Activated naive CD4-positive, alpha-beta T cell treated with anti-CD3 and anti-CD28 coated beads for 36 hours (primary cell): ENCODE measurements at regions of chr6 and their contacts with region 1.

Region 1: DNA sequence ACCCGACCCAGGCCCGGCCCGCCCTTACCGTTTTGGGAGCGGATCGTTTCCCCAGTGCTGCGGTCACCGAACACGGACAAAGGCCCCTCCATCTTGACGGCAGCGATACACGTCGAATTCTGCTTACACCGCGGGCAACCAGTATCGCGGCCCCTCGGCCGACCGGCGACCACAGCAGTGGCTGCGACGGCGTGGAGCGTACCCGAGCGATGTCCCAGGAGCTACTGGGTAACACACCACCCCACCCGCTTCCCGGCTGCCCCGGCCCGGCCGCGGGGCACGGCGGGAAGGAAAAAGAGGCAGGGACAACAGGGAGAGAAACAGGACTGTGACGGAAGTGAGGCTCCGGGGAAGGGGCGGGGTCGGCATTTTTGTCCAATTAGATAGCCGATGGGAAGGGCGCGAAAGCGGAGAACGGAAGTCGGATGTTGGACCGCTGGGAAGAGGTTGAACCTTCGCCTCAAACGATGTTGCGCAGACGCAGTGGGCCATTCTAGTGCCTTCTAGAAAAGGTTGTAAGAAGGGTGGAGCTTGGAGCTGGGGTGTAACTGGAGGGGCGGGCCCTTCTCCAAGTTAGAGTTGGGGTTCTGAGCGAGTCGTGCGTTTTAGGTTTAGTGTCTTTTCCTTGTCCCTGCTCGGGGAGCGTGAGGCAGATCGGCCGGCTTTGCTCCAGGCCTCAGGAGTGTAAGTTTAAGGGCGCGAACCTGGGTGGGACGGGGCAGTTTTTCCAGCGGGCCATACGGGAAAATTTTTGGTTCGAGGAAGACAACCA is at the start of gene TCP1:
- DNase-seq: peak; percentile 100
- H3K4me3 Mint-ChIP-seq: peak within 1 kb of the TSS; percentile 99
- H3K27ac Mint-ChIP-seq: peak within 1 kb of the TSS; percentile 98
- H3K4me1 Mint-ChIP-seq: peaks cover 66% of the 10 kb centered on the region
- H3K27me3 Mint-ChIP-seq: no peaks in the 10 kb centered on the region
- total RNA-seq, gene TCP1: 420 to 425 TPM

Region 2: GRCh38 chr6:159754959-159755914 is 34.3 kb before region 1 on chr6:
- CTCF ChIA-PET with region 1: interaction called, 3 read pairs
- intact Hi-C with region 1: loop called (anchors 5 kb)
- DNase-seq: no peak
- H3K4me3 Mint-ChIP-seq: no peak overlapping the region
- H3K27ac Mint-ChIP-seq: peak overlapping the region; percentile 28
- H3K4me1 Mint-ChIP-seq: peaks cover 18% of the 10 kb centered on the region
- H3K27me3 Mint-ChIP-seq: no peaks in the 10 kb centered on the region

Region 3: DNA sequence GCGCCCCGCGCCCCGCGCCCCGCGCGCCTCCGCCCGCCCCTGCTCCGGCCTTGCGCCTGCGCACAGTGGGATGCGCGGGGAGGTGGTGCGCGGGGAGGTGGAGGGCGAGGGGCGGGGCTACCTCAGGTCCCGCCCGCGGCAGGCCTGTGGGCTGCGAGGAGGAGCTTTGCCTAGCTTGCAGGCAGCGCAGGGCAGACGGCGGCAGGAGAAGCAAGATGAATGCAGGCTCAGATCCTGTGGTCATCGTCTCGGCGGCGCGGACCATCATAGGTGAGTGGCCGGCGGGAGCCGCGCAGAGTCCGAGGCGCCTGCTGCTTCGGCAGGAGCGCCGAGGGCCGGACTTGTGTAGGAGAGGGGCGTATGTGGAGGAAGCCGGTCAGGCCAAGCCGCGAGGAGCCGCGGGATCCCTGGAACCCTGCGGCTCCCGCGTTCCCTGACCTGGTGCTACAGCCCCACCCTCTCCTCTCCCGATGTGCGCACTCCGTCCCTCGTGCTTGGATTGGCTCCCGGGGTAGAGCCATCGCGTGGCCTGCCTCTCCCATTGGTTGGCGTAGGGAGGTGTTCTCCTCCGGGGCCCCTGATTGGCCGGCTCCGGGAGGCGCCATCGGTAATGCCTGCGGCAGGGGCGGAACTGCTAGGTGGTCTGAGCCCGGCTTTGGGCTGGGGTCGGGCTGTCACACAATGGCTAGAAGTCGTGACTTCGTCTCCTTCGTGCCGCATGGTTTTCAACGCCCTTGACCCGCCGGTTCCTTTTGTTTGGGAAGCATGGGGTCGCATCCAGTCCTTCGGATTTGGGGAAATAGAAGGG is 27.5 kb before region 1 on chr6 and contains the start of gene ACAT2:
- CTCF ChIA-PET with region 1: no interaction called
- intact Hi-C with region 1: loop called (anchors 1 kb)
- DNase-seq: peak; percentile 97
- H3K4me3 Mint-ChIP-seq: peak within 1 kb of the TSS; percentile 96
- H3K27ac Mint-ChIP-seq: peak within 1 kb of the TSS; percentile 96
- H3K4me1 Mint-ChIP-seq: peaks cover 42% of the 10 kb centered on the region
- H3K27me3 Mint-ChIP-seq: no peaks in the 10 kb centered on the region
- total RNA-seq, gene ACAT2: 84.9 to 92.4 TPM

Region 4: DNA sequence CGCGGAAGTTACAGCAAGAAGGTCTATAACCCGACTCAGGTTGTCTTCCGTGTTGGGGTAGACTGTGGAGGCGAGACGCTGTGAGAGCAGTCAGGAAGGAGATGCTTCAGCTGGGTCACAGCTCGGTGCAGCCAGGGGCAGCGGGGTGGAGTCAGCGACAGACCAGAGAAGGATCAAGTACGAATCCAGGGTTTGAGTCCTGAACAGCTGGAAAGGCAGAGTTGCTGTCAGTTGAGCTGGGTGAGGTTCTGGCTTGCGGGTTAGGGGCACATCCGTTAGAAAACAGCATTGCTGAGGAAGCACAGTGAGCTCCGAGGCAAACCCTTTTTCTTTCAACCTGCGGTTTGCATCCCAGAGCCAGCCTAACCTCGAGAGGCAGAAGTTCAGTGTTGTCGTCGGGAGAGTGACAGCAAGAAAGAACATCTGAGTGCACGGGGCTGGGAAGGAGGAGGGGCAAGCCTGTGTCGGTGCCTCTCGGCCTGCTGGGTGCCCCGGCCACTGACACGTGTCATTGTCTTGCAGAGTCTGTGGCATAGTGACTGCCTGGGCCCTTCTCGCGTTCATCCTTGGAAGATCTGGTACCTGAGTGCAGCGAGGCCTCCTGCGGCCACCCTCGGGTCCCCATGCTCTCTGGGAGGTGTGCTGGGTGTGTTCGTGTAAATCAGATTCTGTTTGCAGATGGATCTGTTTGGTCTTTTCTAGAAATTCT is 30.5 kb after region 1 on chr6:
- CTCF ChIA-PET with region 1: no interaction called
- intact Hi-C with region 1: loop called (anchors 2 kb)
- DNase-seq: peak; percentile 57
- H3K4me3 Mint-ChIP-seq: peak overlapping the region; percentile 34
- H3K27ac Mint-ChIP-seq: no peak overlapping the region
- H3K4me1 Mint-ChIP-seq: peaks cover 15% of the 10 kb centered on the region
- H3K27me3 Mint-ChIP-seq: no peaks in the 10 kb centered on the region

Region 5: GRCh38 chr6:159968440-159969203 is 179.1 kb after region 1 on chr6 and contains the start of gene IGF2R:
- CTCF ChIA-PET with region 1: no interaction called
- intact Hi-C with region 1: loop called (anchors 1 kb)
- DNase-seq: peak; percentile 94
- H3K4me3 Mint-ChIP-seq: peak within 1 kb of the TSS; percentile 87
- H3K27ac Mint-ChIP-seq: peak within 1 kb of the TSS; percentile 87
- H3K4me1 Mint-ChIP-seq: peaks cover 36% of the 10 kb centered on the region
- H3K27me3 Mint-ChIP-seq: no peaks in the 10 kb centered on the region
- total RNA-seq, gene IGF2R: 42.1 to 44.5 TPM